ENCODE measurements at regions of chr9 and their contacts with region 1.

Region 1: DNA sequence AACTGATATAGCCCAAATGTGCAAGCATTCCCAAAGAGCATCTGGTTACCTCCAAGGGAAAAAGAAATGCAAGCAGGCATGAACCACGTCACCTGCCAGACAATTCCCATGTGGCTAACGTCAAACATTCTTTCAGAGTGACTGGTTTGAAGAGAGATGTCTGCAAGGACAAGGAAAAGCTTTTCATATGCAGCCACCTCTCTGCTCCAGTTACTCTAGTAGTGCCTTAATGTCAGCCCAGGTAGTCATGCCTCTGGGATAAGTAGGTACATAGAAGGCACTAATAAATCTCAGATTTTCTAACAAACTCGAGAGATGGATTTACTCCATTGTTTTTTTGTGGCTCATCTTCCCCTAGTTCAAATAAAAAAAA is 96.8 kb upstream of the IFNK start:
- DNase-seq: peak; percentile 38 to 39
- H3K4me3 ChIP-seq: no peak overlapping the region
- H3K4me3 Mint-ChIP-seq: no peak overlapping the region
- H3K27ac Mint-ChIP-seq: peak overlapping the region; percentile 79
- H3K4me1 ChIP-seq: peaks cover 67% of the 10 kb centered on the region
- H3K4me1 Mint-ChIP-seq: peaks cover 41% of the 10 kb centered on the region
- H3K27me3 ChIP-seq: no peaks in the 10 kb centered on the region
- H3K27me3 Mint-ChIP-seq: no peaks in the 10 kb centered on the region
- CTCF ChIP-seq: no peak

Region 2: GRCh38 chr9:27371382-27371781 is 55.9 kb before region 1 on chr9:
- CTCF ChIA-PET with region 1: no interaction called
- POLR2A ChIA-PET with region 1: no interaction called
- intact Hi-C with region 1: loop called (anchors 1 kb)
- DNase-seq: peak; percentile 64 to 65
- H3K4me3 ChIP-seq: no peak overlapping the region
- H3K4me3 Mint-ChIP-seq: peak overlapping the region; percentile 57
- H3K27ac Mint-ChIP-seq: peak overlapping the region; percentile 80
- H3K4me1 ChIP-seq: peaks cover 52% of the 10 kb centered on the region
- H3K4me1 Mint-ChIP-seq: peaks cover 37% of the 10 kb centered on the region
- H3K27me3 ChIP-seq: no peaks in the 10 kb centered on the region
- H3K27me3 Mint-ChIP-seq: no peaks in the 10 kb centered on the region
- CTCF ChIP-seq: no peak

Region 3: DNA sequence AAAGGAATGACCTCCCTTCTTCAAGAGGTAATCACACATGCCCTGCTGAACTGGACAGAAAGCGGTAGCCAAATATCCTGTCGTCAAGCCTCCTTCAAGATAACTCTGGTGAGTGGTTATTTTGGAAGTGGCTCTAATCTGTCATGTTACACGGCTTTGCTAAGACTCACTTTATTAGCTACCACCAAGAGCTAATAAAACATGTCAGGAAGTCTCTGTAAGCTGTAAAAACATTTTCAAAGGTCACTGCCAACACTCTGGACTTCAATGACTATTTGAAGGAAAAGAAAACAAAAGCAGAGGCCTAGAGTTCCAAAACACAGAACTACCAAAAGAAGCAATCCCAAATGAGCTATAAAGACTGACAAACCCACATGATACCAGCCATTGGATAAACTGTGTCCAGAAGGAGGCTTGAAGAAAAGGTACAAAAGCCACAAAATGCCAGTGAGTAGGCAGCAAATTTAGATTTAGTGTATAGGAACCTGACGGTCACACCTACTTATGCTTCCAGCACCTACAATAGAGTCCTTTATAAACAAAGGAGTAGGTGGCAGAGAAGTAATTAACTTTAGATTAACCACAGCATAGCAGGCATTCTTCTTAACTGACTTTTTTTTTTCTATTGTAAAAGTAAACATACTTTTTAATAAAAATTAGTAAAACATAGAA is 33.0 kb before region 1 on chr9:
- CTCF ChIA-PET with region 1: no interaction called
- POLR2A ChIA-PET with region 1: interaction called, 4 read pairs
- intact Hi-C with region 1: loop called (anchors 2 kb)
- DNase-seq: no peak
- H3K4me3 ChIP-seq: no peak overlapping the region
- H3K4me3 Mint-ChIP-seq: no peak overlapping the region
- H3K27ac Mint-ChIP-seq: no peak overlapping the region
- H3K4me1 ChIP-seq: peaks cover 24% of the 10 kb centered on the region
- H3K4me1 Mint-ChIP-seq: peaks cover 11% of the 10 kb centered on the region
- H3K27me3 ChIP-seq: no peaks in the 10 kb centered on the region
- H3K27me3 Mint-ChIP-seq: no peaks in the 10 kb centered on the region
- CTCF ChIP-seq: no peak

Region 4: GRCh38 chr9:27489087-27489876 is 62.0 kb after region 1 on chr9:
- CTCF ChIA-PET with region 1: no interaction called
- POLR2A ChIA-PET with region 1: no interaction called
- intact Hi-C with region 1: loop called (anchors 5 kb)
- DNase-seq: no peak
- H3K4me3 ChIP-seq: no peak overlapping the region
- H3K4me3 Mint-ChIP-seq: no peak overlapping the region
- H3K27ac Mint-ChIP-seq: no peak overlapping the region
- H3K4me1 ChIP-seq: 0 out of 2 replicates have a peak, but pooled peaks cover 5% of the 10 kb centered on the region
- H3K4me1 Mint-ChIP-seq: peaks cover 14% of the 10 kb centered on the region
- H3K27me3 ChIP-seq: no peaks in the 10 kb centered on the region
- H3K27me3 Mint-ChIP-seq: no peaks in the 10 kb centered on the region
- CTCF ChIP-seq: no peak

Measured in Caco-2 (cell line).